Thyroid gland (tissue), 4 donors: ENCODE measurements at regions of chr3 and their contacts with region 1.

Region 1: DNA sequence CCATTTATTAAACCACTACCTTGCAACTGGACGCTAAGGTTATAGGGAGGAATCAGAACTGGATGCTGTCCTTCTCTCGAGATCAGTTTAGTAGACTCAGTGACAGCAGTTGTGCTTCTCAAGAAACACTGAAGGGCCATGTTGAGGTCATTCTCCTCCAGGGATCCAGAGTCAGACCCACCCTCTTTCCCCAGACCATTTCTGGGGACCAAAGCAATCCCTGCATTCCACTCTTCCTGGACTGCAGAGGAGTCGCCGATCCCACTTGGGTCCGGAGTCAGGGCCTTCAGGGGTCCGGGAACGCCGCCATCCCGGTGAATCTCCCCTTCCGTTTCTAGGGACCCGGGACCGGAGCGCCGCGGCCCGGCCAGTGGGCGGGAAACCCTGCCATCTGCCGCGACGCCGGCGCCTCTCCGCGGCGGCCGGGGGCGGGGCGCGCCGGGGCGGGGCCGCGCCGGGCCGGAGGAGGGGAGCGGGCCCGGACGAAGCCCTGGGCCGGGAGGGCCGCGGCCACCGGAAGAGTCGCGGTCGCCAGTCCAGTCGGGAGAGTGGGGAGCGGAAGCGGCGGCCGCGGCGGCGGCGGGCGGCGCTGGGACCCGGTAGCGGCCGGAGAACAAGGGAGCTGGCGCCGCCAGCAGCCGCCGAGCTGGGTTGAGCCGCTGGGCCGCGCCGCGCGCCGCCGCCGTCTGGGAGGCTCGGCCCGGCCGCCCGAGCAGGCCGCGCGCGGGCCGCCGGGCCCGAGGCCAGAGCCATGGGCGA is at the start of gene DVL3:
- DNase-seq: peak; percentile 73 to 75
- H3K4me3 ChIP-seq: peak within 1 kb of the TSS; percentile 90 to 98 (median 94)
- H3K27ac ChIP-seq: peak within 1 kb of the TSS; percentile 78 to 89 (median 85)
- H3K4me1 ChIP-seq: peaks cover 20 to 30% of the 10 kb centered on the region in 2 donors
- H3K27me3 ChIP-seq: no peaks in the 10 kb centered on the region
- CTCF ChIP-seq: no peak
- POLR2A ChIP-seq: peak in 1 of 2 donors; percentile 73
- total RNA-seq, gene DVL3: 48.2 to 137 (median 65.3) TPM

Region 2: DNA sequence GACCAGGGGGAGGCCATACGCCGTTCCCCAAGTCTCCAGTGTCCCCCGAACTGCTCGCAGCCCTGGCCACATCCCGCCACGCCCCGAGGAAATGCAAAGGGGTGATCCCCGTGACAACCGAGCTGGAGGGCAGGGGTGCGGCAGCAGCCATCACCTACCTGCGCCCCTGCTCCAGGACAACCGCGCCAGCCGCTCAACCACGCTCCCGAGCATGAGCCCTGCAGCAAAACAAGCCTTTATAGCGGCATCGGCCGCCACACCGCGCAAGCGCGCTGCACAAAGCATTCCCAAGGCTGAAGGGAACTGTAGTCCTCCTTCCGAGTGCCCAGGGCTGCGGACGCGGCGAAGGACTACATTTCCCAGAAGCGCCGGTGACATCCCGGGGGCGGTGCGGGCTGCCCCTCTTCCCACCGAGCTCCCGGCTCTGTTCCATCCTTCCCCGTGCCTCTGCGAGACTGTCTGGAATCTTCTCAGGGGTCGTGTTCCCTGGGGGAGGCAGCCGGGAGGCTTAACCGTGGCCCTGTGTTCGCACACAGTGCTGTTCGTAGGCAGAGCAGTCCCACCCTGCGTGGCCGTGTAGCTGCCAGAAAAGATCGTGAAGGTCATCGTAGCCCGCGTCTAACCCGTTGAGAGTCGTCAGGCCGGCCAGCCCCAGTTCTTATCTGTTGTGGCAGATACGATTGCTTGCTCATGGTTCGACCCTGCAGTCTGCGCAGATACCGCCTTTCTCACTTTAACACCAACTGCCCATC is 137.2 kb before region 1 on chr3 and contains the start of gene ABCC5:
- intact Hi-C with region 1: loop called (anchors 10 kb)
- DNase-seq: peak; percentile 91
- H3K4me3 ChIP-seq: peak within 1 kb of the TSS; percentile 97
- H3K27ac ChIP-seq: peak within 1 kb of the TSS; percentile 10 to 79 (median 63)
- H3K4me1 ChIP-seq: peaks cover 6% of the 10 kb centered on the region in 2 donors
- H3K27me3 ChIP-seq: no peaks in the 10 kb centered on the region
- CTCF ChIP-seq: peak in 4 of 6 experiments; percentile 38 to 59 (median 46)
- POLR2A ChIP-seq: peak in 1 of 2 donors; percentile 52
- total RNA-seq, gene ABCC5: 12.2 to 24.3 (median 18.2) TPM